ENCODE measurements at regions of chr11 and their contacts with region 1.

Region 1: GRCh38 chr11:33835143-33835878 is 56.6 kb downstream of the LMO2 start:
- DNase-seq: peak; percentile 48
- H3K4me3 ChIP-seq: no peak overlapping the region
- H3K27me3 ChIP-seq: peaks cover 11% of the 10 kb centered on the region
- CTCF ChIP-seq: peak; percentile 33; the same call in 1 of the 2 replicates

Region 2: GRCh38 chr11:33435216-33435615 is 400.1 kb before region 1 on chr11:
- CTCF ChIA-PET with region 1: no interaction called
- POLR2A ChIA-PET with region 1: no interaction called
- DNase-seq: no peak
- H3K4me3 ChIP-seq: no peak overlapping the region
- H3K27me3 ChIP-seq: no peaks in the 10 kb centered on the region
- CTCF ChIP-seq: no peak

Region 3: DNA sequence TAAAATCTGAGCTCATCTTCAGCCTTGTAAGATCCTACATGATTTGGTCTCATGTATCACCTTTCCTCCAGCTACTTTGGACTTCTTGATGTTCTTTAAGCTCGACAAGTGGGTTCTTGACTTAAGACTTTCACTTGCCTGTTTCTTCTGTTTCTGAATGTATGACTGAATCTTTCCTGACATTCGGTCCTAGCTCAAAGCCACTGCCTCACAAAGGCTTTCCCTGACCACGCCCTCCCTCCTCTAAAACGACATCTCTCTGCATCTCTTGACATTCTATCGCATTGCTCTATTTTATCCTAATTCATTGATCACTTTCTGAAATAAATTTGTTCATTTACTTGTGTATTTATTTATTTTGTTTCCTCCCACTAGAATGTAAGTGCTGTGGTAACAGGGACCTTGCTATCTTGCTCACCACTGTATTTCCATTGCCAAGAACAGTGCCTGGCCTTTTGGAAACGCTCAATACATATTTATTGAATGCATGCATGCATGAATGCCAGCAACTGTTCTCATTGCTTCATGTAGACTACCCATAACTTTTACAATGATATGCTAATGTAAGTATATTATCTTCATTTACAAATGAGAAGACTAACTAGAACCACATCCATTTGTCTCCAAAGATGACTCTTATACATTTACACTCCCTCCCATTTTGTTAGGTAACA is 13.5 kb after region 1 on chr11:
- CTCF ChIA-PET with region 1: interaction called, 13 read pairs
- POLR2A ChIA-PET with region 1: interaction called, 4 read pairs
- DNase-seq: no peak
- H3K4me3 ChIP-seq: no peak overlapping the region
- H3K27me3 ChIP-seq: peaks cover 14% of the 10 kb centered on the region
- CTCF ChIP-seq: no peak

Measured in BJ (cell line).